IMR-90 (cell line): ENCODE measurements at regions of chr11 and their contacts with region 1.

Region 1: GRCh38 chr11:44680982-44681597 is 45.7 kb upstream of the TSPAN18 start:
- DNase-seq: no peak
- ATAC-seq: no peak
- H3K4me3 ChIP-seq: no peak overlapping the region
- H3K27ac ChIP-seq: no peak overlapping the region
- H3K4me1 ChIP-seq: no peaks in the 10 kb centered on the region; the same call in 1 of the 2 replicates
- H3K27me3 ChIP-seq: peaks cover 11% of the 10 kb centered on the region; the same call in 1 of the 2 replicates
- CTCF ChIP-seq: no peak
- POLR2A ChIP-seq: no peak
- RAD21 ChIP-seq: no peak

Region 2: GRCh38 chr11:44645827-44646226 is 35.3 kb before region 1 on chr11:
- CTCF ChIA-PET with region 1: no interaction called
- POLR2A ChIA-PET with region 1: no interaction called
- dilution Hi-C with region 1: no loop called
- in situ Hi-C with region 1: no loop called
- intact Hi-C with region 1: loop called (anchors 5 kb)
- DNase-seq: no peak
- ATAC-seq: no peak
- H3K4me3 ChIP-seq: no peak overlapping the region
- H3K27ac ChIP-seq: no peak overlapping the region
- H3K4me1 ChIP-seq: no peaks in the 10 kb centered on the region
- H3K27me3 ChIP-seq: peaks cover 3% of the 10 kb centered on the region
- CTCF ChIP-seq: no peak
- POLR2A ChIP-seq: no peak
- RAD21 ChIP-seq: no peak

Region 3: GRCh38 chr11:45285930-45286632 is 605.0 kb after region 1 on chr11 and contains the start of gene SYT13:
- CTCF ChIA-PET with region 1: no interaction called
- POLR2A ChIA-PET with region 1: no interaction called
- dilution Hi-C with region 1: no loop called
- in situ Hi-C with region 1: loop called (anchors 25 kb)
- intact Hi-C with region 1: no loop called
- DNase-seq: no peak
- ATAC-seq: no peak
- H3K4me3 ChIP-seq: no peak within 1 kb of the TSS
- H3K27ac ChIP-seq: no peak within 1 kb of the TSS
- H3K4me1 ChIP-seq: no peaks in the 10 kb centered on the region
- H3K27me3 ChIP-seq: peaks cover 51% of the 10 kb centered on the region
- CTCF ChIP-seq: no peak
- POLR2A ChIP-seq: no peak
- RAD21 ChIP-seq: no peak
- total RNA-seq, gene SYT13: not detected in 2 replicates